ENCODE measurements at regions of chr9 and their contacts with region 1.

Region 1: DNA sequence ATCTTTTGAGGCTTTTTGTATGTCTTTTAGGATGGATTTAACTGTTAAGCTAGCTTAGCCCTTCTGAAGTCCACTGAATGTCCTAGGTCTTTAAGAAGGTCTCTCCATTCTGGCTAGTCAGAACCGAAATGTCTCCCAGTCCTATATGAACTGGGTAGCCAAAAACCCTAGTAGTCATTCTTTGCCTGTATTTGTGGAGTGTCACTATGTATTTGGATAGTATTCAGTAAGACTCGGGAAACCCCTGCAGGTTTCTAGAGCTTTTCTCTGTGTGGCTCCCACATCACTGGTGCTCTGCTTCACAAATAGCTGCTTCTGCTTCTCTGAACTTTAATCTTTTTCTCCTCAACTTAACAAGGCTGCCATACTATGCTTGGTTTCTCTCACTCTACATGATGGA is 68.0 kb downstream of the RIC1 start:
- DNase-seq: no peak
- ATAC-seq: no peak
- H3K4me3 ChIP-seq: no peak overlapping the region
- H3K27ac ChIP-seq: no peak overlapping the region
- H3K4me1 ChIP-seq: peaks cover 32% of the 10 kb centered on the region
- H3K27me3 ChIP-seq: no peaks in the 10 kb centered on the region
- CTCF ChIP-seq: no peak

Region 2: DNA sequence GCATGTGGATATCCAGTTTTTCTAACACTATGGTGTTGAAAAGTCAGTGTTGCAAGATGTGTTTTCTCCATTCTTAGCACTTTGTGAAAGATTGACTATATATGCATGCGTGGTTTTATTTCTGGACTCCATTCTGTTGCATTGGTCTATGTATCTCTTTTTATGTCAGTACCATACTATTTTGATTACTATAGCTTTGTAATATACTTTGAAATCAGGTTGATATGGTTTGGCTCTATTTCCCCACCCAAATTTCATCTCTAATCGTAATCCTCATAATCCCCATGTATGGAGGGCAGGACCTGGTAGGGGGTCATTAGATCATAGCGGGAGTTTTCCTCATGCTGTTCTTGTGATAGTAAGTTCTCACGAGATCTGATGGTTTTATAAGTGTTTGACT is 61.5 kb before region 1 on chr9:
- intact Hi-C with region 1: loop called in 1 of 2 experiments (anchors 5 kb)
- DNase-seq: no peak
- ATAC-seq: no peak
- H3K4me3 ChIP-seq: no peak overlapping the region
- H3K27ac ChIP-seq: no peak overlapping the region
- H3K4me1 ChIP-seq: peaks cover 35% of the 10 kb centered on the region
- H3K27me3 ChIP-seq: no peaks in the 10 kb centered on the region
- CTCF ChIP-seq: no peak

Region 3: GRCh38 chr9:5718296-5719032 is 21.6 kb after region 1 on chr9:
- intact Hi-C with region 1: no loop called
- DNase-seq: no peak
- ATAC-seq: peak in 2 of 4 donors; percentile 37 to 47
- H3K4me3 ChIP-seq: no peak overlapping the region
- H3K27ac ChIP-seq: no peak overlapping the region
- H3K4me1 ChIP-seq: peaks cover 10% of the 10 kb centered on the region
- H3K27me3 ChIP-seq: no peaks in the 10 kb centered on the region
- CTCF ChIP-seq: no peak

Region 4: DNA sequence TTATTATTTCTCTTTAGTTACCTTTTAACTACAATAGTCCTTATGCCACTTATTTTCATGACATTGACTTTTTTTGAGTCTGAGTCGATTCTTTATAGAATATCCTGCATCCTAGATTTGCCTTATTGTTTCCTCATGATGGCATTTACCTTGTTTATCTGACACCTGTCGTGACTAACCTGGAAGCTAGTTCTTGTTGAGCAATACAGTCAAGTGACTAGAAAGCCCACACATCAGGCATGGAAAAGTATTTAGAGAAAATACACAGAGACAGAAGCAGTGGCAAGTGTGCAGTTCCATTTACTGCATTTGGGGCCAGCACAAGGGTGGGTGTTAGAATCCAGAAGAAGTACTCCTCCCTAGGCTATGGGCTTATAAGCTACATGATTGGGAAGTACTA is 38.2 kb after region 1 on chr9:
- intact Hi-C with region 1: no loop called
- DNase-seq: no peak
- ATAC-seq: no peak
- H3K4me3 ChIP-seq: no peak overlapping the region
- H3K27ac ChIP-seq: no peak overlapping the region
- H3K4me1 ChIP-seq: no peaks in the 10 kb centered on the region
- H3K27me3 ChIP-seq: no peaks in the 10 kb centered on the region
- CTCF ChIP-seq: no peak

Region 5: GRCh38 chr9:5786370-5787127 is 89.7 kb after region 1 on chr9:
- intact Hi-C with region 1: no loop called
- DNase-seq: no peak
- ATAC-seq: peak in 3 of 4 donors; percentile 32 to 58 (median 43)
- H3K4me3 ChIP-seq: no peak overlapping the region
- H3K27ac ChIP-seq: no peak overlapping the region
- H3K4me1 ChIP-seq: peaks cover 7% of the 10 kb centered on the region
- H3K27me3 ChIP-seq: no peaks in the 10 kb centered on the region
- CTCF ChIP-seq: no peak